ENCODE measurements at regions of chr18 and their contacts with region 1.

Region 1: DNA sequence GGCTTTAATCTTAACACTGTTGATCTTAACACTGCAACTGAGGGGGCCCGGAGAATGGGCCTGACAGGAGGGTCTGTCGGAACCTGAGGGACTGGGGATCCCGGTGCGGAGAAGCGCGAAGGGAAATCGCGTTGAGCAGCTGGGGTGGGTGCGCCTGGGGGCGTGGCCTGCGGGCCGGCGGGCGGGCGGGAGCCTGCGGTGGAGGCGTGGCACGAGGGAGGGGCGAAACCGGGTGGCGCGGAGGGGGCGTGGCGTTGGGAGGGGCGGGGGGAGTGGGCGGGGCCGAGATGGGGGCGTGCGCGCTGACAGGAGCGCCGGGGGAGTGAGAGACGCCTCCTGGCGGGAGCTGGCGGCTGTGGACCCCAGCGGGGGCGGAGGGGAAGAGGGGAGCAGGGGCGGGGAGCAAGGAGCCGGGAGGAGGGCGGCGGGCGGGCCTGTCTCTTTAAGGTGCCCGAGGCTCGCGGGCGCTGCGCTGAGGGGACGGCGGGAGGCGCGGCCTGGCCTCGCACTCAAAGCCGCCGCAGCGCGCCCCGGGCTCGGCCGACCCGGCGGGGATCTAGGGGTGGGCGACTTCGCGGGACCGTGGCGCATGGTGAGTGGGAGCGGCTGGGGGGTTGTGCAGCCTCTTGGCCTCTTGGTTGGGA is at the start of gene TWSG1:
- DNase-seq: peak; percentile 92 to 97 (median 95)
- ATAC-seq: peak; percentile 89 to 97 (median 96)
- H3K4me3 ChIP-seq: peak within 1 kb of the TSS; percentile 66 to 93 (median 82)
- H3K27ac ChIP-seq: peak within 1 kb of the TSS in 11 of 12 donors; percentile 64 to 89 (median 69)
- H3K4me1 ChIP-seq: peaks cover 0 to 31% (median 10%) of the 10 kb centered on the region in 12 donors
- H3K27me3 ChIP-seq: no peaks in the 10 kb centered on the region
- CTCF ChIP-seq: peak; percentile 20 to 65 (median 52)
- POLR2A ChIP-seq: peak in 1 of 2 donors; percentile 61
- total RNA-seq, gene TWSG1: 9.0 to 18.0 (median 13.6) TPM

Region 2: GRCh38 chr18:9066817-9067306 is 267.6 kb before region 1 on chr18:
- intact Hi-C with region 1: loop called in 8 of 10 experiments (anchors 2 to 10 kb)
- DNase-seq: no peak
- ATAC-seq: no peak
- H3K4me3 ChIP-seq: no peak overlapping the region
- H3K27ac ChIP-seq: no peak overlapping the region
- H3K4me1 ChIP-seq: peaks cover 0 to 37% (median 0%) of the 10 kb centered on the region in 12 donors
- H3K27me3 ChIP-seq: no peaks in the 10 kb centered on the region
- CTCF ChIP-seq: no peak
- POLR2A ChIP-seq: no peak

Region 3: GRCh38 chr18:9136315-9137155 is 197.9 kb before region 1 on chr18 and contains the start of gene ANKRD12:
- intact Hi-C with region 1: loop called in 1 of 10 experiments (anchors 5 kb)
- DNase-seq: peak; percentile 98 to 99 (median 98)
- ATAC-seq: peak; percentile 94 to 98 (median 96)
- H3K4me3 ChIP-seq: peak within 1 kb of the TSS; percentile 62 to 96 (median 82)
- H3K27ac ChIP-seq: peak within 1 kb of the TSS; percentile 97 to 99 (median 98)
- H3K4me1 ChIP-seq: peaks cover 6 to 60% (median 43%) of the 10 kb centered on the region in 12 donors
- H3K27me3 ChIP-seq: no peaks in the 10 kb centered on the region
- CTCF ChIP-seq: peak in 1 of 12 donors; percentile 4
- POLR2A ChIP-seq: peak in 1 of 2 donors; percentile 68
- total RNA-seq, gene ANKRD12: 18.6 to 70.9 (median 53.8) TPM

Region 4: DNA sequence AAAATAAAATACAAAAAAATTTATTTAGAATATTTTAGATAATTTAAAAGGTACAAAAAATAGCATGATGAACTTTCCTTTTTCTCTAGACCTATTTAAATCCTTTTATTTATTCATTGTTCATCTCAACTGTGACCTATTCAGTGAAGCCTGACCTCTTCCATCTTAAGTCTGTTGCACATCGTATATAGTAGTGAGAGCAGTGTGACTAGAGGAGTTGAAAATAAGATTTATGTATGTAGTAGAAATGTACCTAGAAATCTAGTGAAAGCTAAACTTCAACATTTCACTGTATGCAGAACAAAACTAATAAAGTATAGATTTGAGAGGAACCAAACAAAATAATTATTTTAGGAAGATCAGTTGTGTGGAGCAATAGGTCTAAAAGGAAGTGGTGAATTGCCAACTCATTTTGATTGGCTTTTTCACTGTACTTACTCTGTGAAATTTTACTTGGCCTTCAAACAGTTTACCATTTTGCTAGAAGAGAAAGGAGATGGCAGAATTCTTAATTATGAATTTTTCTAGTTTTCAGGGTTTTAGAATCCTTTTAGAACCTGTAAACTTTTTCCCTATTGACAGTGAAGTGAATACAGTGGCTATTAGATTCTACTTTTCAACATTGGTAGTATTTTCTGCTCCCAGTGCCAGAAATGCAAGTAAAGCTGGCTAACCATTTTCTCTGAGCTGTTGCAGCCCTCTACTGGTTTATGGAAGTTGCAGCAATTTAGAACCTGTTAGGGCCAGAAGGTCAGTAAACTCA is 186.8 kb before region 1 on chr18:
- intact Hi-C with region 1: no loop called
- DNase-seq: peak in 2 of 5 donors; percentile 27 to 33
- ATAC-seq: peak; percentile 78 to 88 (median 84)
- H3K4me3 ChIP-seq: no peak overlapping the region
- H3K27ac ChIP-seq: peak overlapping the region in 2 of 12 donors; percentile 10 to 77
- H3K4me1 ChIP-seq: peaks cover 0 to 98% (median 69%) of the 10 kb centered on the region in 12 donors
- H3K27me3 ChIP-seq: no peaks in the 10 kb centered on the region
- CTCF ChIP-seq: peak; percentile 61 to 91 (median 74)
- POLR2A ChIP-seq: no peak

Region 5: DNA sequence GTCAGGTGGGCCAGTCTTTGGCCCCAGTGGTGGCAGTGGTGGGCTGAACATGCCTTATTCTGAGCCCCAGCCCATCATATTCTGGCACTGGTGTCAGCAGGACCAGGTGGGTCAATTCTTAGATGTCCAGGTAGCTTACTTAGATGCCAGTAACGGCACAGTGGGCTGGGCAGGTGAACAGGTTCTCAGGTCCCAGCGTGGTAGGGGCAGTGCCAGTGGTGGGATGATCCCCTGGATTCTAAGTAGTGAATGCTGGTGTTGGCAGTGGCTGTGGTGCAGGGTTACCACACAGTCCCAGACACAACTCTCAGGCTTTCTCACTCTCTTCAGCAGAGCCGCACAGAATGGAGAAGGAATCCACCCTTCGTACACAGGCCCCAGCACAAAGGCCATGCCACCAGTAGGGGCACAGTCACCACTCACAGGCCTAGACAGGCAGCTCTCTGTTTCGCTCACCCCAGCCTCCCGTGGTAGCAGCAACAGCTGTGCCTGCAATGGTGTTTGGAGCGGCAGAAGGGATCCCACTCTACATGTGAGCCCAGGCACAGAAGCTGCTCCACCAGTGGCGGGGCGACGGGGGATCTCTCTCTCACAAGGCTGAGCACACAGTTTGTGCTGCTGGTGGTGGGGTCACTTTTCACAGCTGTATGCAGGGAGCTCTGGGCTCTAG is 100.5 kb before region 1 on chr18:
- intact Hi-C with region 1: no loop called
- DNase-seq: no peak
- ATAC-seq: peak in 1 of 4 donors; percentile 22
- H3K4me3 ChIP-seq: no peak overlapping the region
- H3K27ac ChIP-seq: no peak overlapping the region
- H3K4me1 ChIP-seq: peaks cover 0 to 4% (median 0%) of the 10 kb centered on the region in 12 donors
- H3K27me3 ChIP-seq: no peaks in the 10 kb centered on the region
- CTCF ChIP-seq: no peak
- POLR2A ChIP-seq: no peak

Region 6: DNA sequence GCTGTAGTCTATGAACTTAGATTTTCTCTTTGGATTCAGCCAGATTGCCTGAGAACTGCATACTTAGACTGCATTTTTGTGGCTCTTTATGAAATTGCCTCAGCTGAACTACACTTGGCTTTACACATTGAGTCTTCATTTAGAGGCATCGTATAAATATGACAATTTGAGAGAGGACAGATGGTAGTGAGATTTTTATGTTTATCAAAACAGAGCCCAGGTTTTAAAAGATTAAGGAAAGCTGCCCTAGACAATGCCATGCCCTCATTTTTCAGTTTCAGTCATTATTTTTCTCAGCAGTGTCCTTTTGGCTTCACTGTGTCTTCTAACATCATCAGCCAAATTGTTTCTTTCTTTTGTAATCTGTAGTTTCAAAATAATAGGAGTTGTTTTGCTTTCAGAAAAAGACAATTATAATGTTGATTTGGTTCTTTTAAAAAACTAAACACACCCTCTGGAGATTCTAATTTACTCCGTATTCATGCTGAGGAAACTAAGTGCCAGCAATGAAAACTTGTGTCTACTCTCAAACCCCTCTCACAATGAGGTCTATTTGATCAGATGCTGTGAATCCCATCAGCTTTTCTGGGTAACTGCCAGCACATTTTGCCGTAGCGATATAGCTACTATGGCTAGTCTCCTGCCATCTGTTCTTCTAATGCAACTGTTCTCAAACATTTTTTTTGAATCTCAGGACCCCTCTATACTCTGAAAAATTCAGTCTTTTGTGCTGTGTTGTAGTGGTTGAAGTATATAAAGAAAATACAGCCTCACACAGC is 46.4 kb after region 1 on chr18:
- intact Hi-C with region 1: no loop called
- DNase-seq: no peak
- ATAC-seq: no peak
- H3K4me3 ChIP-seq: no peak overlapping the region
- H3K27ac ChIP-seq: no peak overlapping the region
- H3K4me1 ChIP-seq: no peaks in the 10 kb centered on the region
- H3K27me3 ChIP-seq: no peaks in the 10 kb centered on the region
- CTCF ChIP-seq: no peak
- POLR2A ChIP-seq: no peak

Region 7: DNA sequence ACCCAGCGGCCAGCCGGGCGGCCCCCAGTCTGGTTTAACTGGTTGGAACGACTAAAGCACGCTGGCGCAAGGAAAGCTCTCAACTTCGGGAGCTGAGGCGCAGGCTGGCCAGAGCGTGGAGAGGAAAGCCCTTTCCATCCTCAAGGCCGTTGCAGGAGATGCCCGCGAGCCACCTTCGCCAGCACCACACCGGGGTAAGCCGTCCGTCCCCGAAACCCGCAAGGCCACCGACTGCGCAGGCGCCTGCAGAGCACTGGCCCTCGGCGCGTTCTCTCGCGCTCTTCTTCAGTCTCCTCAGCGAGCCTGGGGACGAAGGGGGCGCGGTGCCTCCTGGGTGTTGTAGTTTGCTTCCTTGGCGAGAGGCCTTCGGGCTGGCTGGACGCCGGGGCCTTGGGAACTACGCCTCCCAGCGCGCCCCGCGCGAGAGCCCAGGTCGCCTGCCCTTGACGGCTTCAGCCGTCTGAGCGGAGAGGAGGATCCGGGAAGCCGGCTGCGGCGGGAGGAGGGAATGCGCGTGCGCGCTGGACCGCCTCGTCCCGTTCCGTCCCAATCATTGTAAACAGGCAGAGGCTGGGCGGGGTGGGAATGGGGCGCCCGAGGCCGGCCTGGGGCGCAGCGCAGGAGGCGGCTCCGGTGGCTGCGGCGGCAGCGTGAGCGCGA is 140.7 kb after region 1 on chr18 and contains the start of gene RALBP1:
- intact Hi-C with region 1: loop called in 5 of 10 experiments (anchors 1 to 10 kb)
- DNase-seq: peak; percentile 99 to 100 (median 100)
- ATAC-seq: peak; percentile 99
- H3K4me3 ChIP-seq: peak within 1 kb of the TSS; percentile 81 to 99 (median 92)
- H3K27ac ChIP-seq: peak within 1 kb of the TSS; percentile 89 to 98 (median 94)
- H3K4me1 ChIP-seq: peaks cover 0 to 30% (median 16%) of the 10 kb centered on the region in 12 donors
- H3K27me3 ChIP-seq: no peaks in the 10 kb centered on the region
- CTCF ChIP-seq: peak in 4 of 12 donors; percentile 35 to 47 (median 43)
- POLR2A ChIP-seq: peak; percentile 51 to 90
- total RNA-seq, gene RALBP1: 36.9 to 91.1 (median 50.3) TPM

Region 8: GRCh38 chr18:9771261-9771976 is 437.0 kb after region 1 on chr18:
- intact Hi-C with region 1: loop called in 1 of 10 experiments (anchors 10 kb)
- DNase-seq: peak; percentile 84 to 92 (median 87)
- ATAC-seq: peak; percentile 87 to 98 (median 94)
- H3K4me3 ChIP-seq: peak overlapping the region in 2 of 12 donors; percentile 8 to 12
- H3K27ac ChIP-seq: peak overlapping the region in 7 of 12 donors; percentile 1 to 86 (median 14)
- H3K4me1 ChIP-seq: peaks cover 0 to 75% (median 9%) of the 10 kb centered on the region in 12 donors
- H3K27me3 ChIP-seq: no peaks in the 10 kb centered on the region
- CTCF ChIP-seq: peak; percentile 95 to 99 (median 98)
- POLR2A ChIP-seq: no peak